ENCODE measurements at regions of chr5 and their contacts with region 1.

Region 1: GRCh38 chr5:156920042-156920860 is 42.8 kb downstream of the TIMD4 start:
- DNase-seq: peak; percentile 77
- ATAC-seq: peak; percentile 68
- H3K4me3 ChIP-seq: peak overlapping the region; percentile 63
- H3K27ac ChIP-seq: peak overlapping the region; percentile 93
- H3K4me1 ChIP-seq: peaks cover 17% of the 10 kb centered on the region
- H3K27me3 ChIP-seq: no peaks in the 10 kb centered on the region
- CTCF ChIP-seq: no peak
- EP300 ChIP-seq: peak; percentile 80 to 88; a peak in 3 of 4 replicates
- POLR2A ChIP-seq: no peak
- RAD21 ChIP-seq: no peak

Region 2: DNA sequence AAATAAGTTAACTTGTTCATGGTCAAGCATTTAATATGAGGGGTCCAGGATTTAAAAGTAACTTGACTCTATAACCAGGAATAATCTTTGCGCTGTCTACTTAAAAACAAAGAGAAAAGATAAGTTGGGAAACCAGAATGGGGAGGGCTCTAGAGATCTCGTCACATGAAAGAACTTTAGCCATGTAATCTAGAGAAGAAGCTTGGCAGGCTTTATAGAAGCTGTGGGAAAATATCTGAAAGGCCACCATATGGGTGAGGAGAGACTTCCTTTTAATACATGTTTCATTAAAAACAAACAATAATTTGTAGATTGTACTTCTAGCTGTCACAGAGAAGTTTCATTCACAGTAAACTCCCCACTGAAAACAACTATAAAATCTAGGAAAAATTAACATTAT is 116.8 kb before region 1 on chr5:
- CTCF ChIA-PET with region 1: no interaction called
- POLR2A ChIA-PET with region 1: no interaction called
- RAD21 ChIA-PET with region 1: no interaction called
- SMC1A ChIA-PET with region 1: no interaction called
- in situ Hi-C with region 1: no loop called
- intact Hi-C with region 1: no loop called
- DNase-seq: no peak
- ATAC-seq: no peak
- H3K4me3 ChIP-seq: no peak overlapping the region
- H3K27ac ChIP-seq: no peak overlapping the region
- H3K4me1 ChIP-seq: no peaks in the 10 kb centered on the region
- H3K27me3 ChIP-seq: no peaks in the 10 kb centered on the region; a peak in 1 of 4 replicates
- CTCF ChIP-seq: no peak
- EP300 ChIP-seq: no peak
- POLR2A ChIP-seq: no peak
- RAD21 ChIP-seq: no peak

Region 3: GRCh38 chr5:156824800-156825199 is 95.5 kb before region 1 on chr5:
- CTCF ChIA-PET with region 1: interaction called, 3 read pairs
- POLR2A ChIA-PET with region 1: interaction called, 6 read pairs
- RAD21 ChIA-PET with region 1: interaction called, 3 read pairs
- SMC1A ChIA-PET with region 1: interaction called, 10 read pairs
- in situ Hi-C with region 1: no loop called
- intact Hi-C with region 1: no loop called
- DNase-seq: no peak
- ATAC-seq: no peak
- H3K4me3 ChIP-seq: no peak overlapping the region
- H3K27ac ChIP-seq: no peak overlapping the region
- H3K4me1 ChIP-seq: peaks cover 11% of the 10 kb centered on the region
- H3K27me3 ChIP-seq: no peaks in the 10 kb centered on the region
- CTCF ChIP-seq: peak; percentile 4 to 45 (median 19); a peak in 2 of 6 replicates
- EP300 ChIP-seq: no peak
- POLR2A ChIP-seq: no peak
- RAD21 ChIP-seq: peak; percentile 49

Region 4: GRCh38 chr5:156879665-156880285 is 40.5 kb before region 1 on chr5:
- CTCF ChIA-PET with region 1: interaction called, 4 read pairs
- POLR2A ChIA-PET with region 1: interaction called, 31 read pairs
- RAD21 ChIA-PET with region 1: interaction called, 50 read pairs
- SMC1A ChIA-PET with region 1: interaction called, 68 read pairs
- in situ Hi-C with region 1: no loop called
- intact Hi-C with region 1: no loop called
- DNase-seq: peak; percentile 39
- ATAC-seq: peak; percentile 85
- H3K4me3 ChIP-seq: no peak overlapping the region
- H3K27ac ChIP-seq: no peak overlapping the region
- H3K4me1 ChIP-seq: peaks cover 3% of the 10 kb centered on the region; the same call in 1 of the 2 replicates
- H3K27me3 ChIP-seq: no peaks in the 10 kb centered on the region
- CTCF ChIP-seq: no peak
- EP300 ChIP-seq: no peak
- POLR2A ChIP-seq: no peak
- RAD21 ChIP-seq: no peak

Region 5: DNA sequence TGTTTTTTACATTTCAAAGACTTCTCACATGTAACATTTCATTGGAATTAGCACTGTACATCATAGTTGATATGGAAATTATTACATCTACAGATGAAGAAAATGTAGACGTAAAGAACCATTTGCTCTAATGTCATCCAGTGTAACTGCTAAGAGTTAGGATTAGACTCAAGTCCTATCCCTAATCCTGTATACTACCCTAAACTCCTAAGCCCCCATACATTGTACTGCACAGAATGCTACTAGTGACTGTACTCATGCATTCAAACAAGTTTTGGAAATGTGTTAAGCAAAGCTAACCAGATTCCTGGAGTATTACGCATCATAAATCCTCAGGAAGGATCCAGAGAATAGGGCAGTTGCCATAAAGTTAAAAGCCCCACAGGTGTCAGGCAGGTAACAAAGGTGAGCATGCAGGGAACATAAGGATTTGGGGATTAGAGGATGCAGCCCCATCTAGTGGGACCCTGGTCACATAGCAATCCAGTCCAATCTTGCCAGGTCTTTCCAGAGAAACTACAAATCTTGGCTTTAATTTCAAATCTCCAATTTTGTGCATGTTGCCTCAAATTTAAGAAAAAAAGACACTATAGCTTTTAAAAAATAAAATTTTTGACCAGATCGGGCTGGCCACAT is 106.7 kb after region 1 on chr5:
- CTCF ChIA-PET with region 1: interaction called, 7 read pairs
- POLR2A ChIA-PET with region 1: interaction called, 4 read pairs
- RAD21 ChIA-PET with region 1: interaction called, 4 read pairs
- SMC1A ChIA-PET with region 1: interaction called, 4 read pairs
- in situ Hi-C with region 1: no loop called
- intact Hi-C with region 1: loop called (anchors 5 kb)
- DNase-seq: no peak
- ATAC-seq: peak; percentile 48
- H3K4me3 ChIP-seq: no peak overlapping the region
- H3K27ac ChIP-seq: no peak overlapping the region
- H3K4me1 ChIP-seq: peaks cover 6% of the 10 kb centered on the region
- H3K27me3 ChIP-seq: no peaks in the 10 kb centered on the region
- CTCF ChIP-seq: peak; percentile 67 to 75 (median 69)
- EP300 ChIP-seq: no peak
- POLR2A ChIP-seq: no peak
- RAD21 ChIP-seq: peak; percentile 70

Region 6: GRCh38 chr5:157116483-157116954 is 196.3 kb after region 1 on chr5:
- CTCF ChIA-PET with region 1: interaction called, 4 read pairs
- POLR2A ChIA-PET with region 1: interaction called, 5 read pairs
- RAD21 ChIA-PET with region 1: interaction called, 21 read pairs
- SMC1A ChIA-PET with region 1: interaction called, 15 read pairs
- in situ Hi-C with region 1: no loop called
- intact Hi-C with region 1: loop called (anchors 10 kb)
- DNase-seq: peak; percentile 63
- ATAC-seq: peak; percentile 88
- H3K4me3 ChIP-seq: peak overlapping the region; percentile 18; the same call in 1 of the 2 replicates
- H3K27ac ChIP-seq: peak overlapping the region; percentile 90
- H3K4me1 ChIP-seq: peaks cover 22% of the 10 kb centered on the region
- H3K27me3 ChIP-seq: no peaks in the 10 kb centered on the region
- CTCF ChIP-seq: no peak
- EP300 ChIP-seq: no peak
- POLR2A ChIP-seq: no peak
- RAD21 ChIP-seq: 0 out of 2 replicates have a peak, but pooled peaks have one; percentile 16

Region 7: DNA sequence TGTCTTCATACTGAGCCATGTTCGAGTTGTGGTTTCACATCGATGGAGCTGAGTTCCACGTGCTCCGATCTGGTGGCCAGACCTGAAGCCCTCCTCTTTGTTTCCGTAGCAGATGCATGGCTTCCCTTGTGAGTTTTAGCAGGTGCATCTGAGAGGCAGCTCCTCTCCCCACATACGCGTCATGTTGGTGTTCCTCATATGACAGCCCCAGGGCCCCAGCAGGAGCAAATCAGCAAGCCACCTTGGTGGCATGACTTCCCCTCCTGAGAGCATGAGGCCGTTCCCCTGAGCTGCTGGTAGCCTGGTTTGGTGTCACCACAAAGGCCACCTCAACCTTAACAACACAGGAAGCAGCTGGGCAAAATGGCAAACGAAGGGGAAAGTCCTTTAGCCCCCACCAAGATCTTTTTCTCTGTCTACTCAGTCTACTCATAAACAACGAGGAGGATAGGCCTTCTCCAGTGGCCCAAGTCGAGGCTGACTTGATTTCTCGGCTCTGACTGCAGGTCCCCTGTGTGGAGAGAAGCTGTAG is 351.6 kb after region 1 on chr5:
- CTCF ChIA-PET with region 1: no interaction called
- POLR2A ChIA-PET with region 1: interaction called, 5 read pairs
- RAD21 ChIA-PET with region 1: interaction called, 8 read pairs
- SMC1A ChIA-PET with region 1: no interaction called
- in situ Hi-C with region 1: no loop called
- intact Hi-C with region 1: loop called (anchors 5 kb)
- DNase-seq: peak; percentile 93
- ATAC-seq: peak; percentile 80
- H3K4me3 ChIP-seq: peak overlapping the region; percentile 60; the same call in 1 of the 2 replicates
- H3K27ac ChIP-seq: peak overlapping the region; percentile 97
- H3K4me1 ChIP-seq: peaks cover 56% of the 10 kb centered on the region
- H3K27me3 ChIP-seq: no peaks in the 10 kb centered on the region
- CTCF ChIP-seq: no peak
- EP300 ChIP-seq: peak; percentile 72 to 75; a peak in 3 of 4 replicates
- POLR2A ChIP-seq: peak; percentile 82
- RAD21 ChIP-seq: no peak

Measured in GM12878 (cell line).